Transverse colon (tissue), 4 donors: ENCODE measurements at regions of chr18 and their contacts with region 1.

Region 1: GRCh38 chr18:78713064-78713463 is 266.6 kb upstream of the SALL3 start:
- DNase-seq: no peak
- H3K4me3 ChIP-seq: no peak overlapping the region
- H3K27ac ChIP-seq: no peak overlapping the region
- H3K4me1 ChIP-seq: no peaks in the 10 kb centered on the region
- H3K27me3 ChIP-seq: no peaks in the 10 kb centered on the region
- CTCF ChIP-seq: no peak
- EP300 ChIP-seq: no peak
- POLR2A ChIP-seq: no peak

Region 2: GRCh38 chr18:78494204-78495085 is 218.6 kb before region 1 on chr18:
- in situ Hi-C with region 1: no loop called
- intact Hi-C with region 1: no loop called
- DNase-seq: no peak
- H3K4me3 ChIP-seq: no peak overlapping the region
- H3K27ac ChIP-seq: no peak overlapping the region
- H3K4me1 ChIP-seq: no peaks in the 10 kb centered on the region
- H3K27me3 ChIP-seq: no peaks in the 10 kb centered on the region
- CTCF ChIP-seq: no peak
- EP300 ChIP-seq: no peak
- POLR2A ChIP-seq: no peak

Region 3: GRCh38 chr18:78683191-78684010 is 29.7 kb before region 1 on chr18:
- in situ Hi-C with region 1: no loop called
- intact Hi-C with region 1: no loop called
- DNase-seq: no peak
- H3K4me3 ChIP-seq: no peak overlapping the region
- H3K27ac ChIP-seq: no peak overlapping the region
- H3K4me1 ChIP-seq: no peaks in the 10 kb centered on the region
- H3K27me3 ChIP-seq: no peaks in the 10 kb centered on the region
- CTCF ChIP-seq: no peak
- EP300 ChIP-seq: no peak
- POLR2A ChIP-seq: no peak

Region 4: GRCh38 chr18:78813936-78814710 is 101.1 kb after region 1 on chr18:
- in situ Hi-C with region 1: loop called in 1 of 4 experiments (anchors 25 kb)
- intact Hi-C with region 1: no loop called
- DNase-seq: no peak
- H3K4me3 ChIP-seq: no peak overlapping the region
- H3K27ac ChIP-seq: no peak overlapping the region
- H3K4me1 ChIP-seq: peaks cover 0 to 3% (median 0%) of the 10 kb centered on the region in 4 donors
- H3K27me3 ChIP-seq: peaks cover 23% of the 10 kb centered on the region
- CTCF ChIP-seq: no peak
- EP300 ChIP-seq: no peak
- POLR2A ChIP-seq: no peak